Activated naive CD4-positive, alpha-beta T cell treated with anti-CD3 and anti-CD28 coated beads, Interleukin-2, amount 10 ng/mL, durations not matched to agents 7 days and 5 days (primary cell): ENCODE measurements at regions of chr19 and their contacts with region 1.

Region 1: DNA sequence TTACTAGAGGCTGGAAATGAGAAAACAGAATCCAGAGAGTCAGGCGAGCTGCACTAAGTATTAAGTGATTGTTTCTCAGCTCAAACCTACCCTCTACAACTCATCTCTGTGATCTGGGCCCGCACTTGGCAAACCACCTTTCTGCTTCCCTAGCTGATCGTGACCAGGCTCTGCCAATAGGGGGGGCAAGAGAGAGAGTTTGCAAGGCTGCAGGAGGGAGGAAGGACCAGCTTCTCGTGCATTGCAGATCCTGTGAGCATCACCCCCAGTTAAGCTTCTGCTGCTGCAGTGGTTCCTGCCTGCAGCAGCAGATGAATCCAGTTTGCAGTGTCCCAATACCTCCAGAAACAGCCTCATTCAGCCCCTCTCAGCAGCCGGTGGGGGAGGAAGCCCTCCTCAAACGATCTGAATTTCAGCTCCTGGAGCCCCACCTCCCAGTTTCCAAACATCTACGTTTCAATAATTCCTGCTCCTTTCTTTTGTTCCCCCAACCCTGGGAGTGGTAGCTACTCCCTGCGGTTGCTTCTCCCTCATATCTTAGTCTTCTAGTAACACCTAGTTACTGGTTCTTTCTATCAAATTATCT is 20.0 kb downstream of the XRCC1 start:
- DNase-seq: peak; percentile 91
- H3K4me3 Mint-ChIP-seq: no peak overlapping the region
- H3K27ac Mint-ChIP-seq: no peak overlapping the region
- H3K4me1 Mint-ChIP-seq: peaks cover 9% of the 10 kb centered on the region
- H3K27me3 Mint-ChIP-seq: no peaks in the 10 kb centered on the region

Region 2: GRCh38 chr19:43503501-43504425 is 51.5 kb before region 1 on chr19:
- CTCF ChIA-PET with region 1: no interaction called
- DNase-seq: peak; percentile 100
- H3K4me3 Mint-ChIP-seq: peak overlapping the region; percentile 83
- H3K27ac Mint-ChIP-seq: peak overlapping the region; percentile 89
- H3K4me1 Mint-ChIP-seq: peaks cover 42% of the 10 kb centered on the region
- H3K27me3 Mint-ChIP-seq: no peaks in the 10 kb centered on the region

Region 3: DNA sequence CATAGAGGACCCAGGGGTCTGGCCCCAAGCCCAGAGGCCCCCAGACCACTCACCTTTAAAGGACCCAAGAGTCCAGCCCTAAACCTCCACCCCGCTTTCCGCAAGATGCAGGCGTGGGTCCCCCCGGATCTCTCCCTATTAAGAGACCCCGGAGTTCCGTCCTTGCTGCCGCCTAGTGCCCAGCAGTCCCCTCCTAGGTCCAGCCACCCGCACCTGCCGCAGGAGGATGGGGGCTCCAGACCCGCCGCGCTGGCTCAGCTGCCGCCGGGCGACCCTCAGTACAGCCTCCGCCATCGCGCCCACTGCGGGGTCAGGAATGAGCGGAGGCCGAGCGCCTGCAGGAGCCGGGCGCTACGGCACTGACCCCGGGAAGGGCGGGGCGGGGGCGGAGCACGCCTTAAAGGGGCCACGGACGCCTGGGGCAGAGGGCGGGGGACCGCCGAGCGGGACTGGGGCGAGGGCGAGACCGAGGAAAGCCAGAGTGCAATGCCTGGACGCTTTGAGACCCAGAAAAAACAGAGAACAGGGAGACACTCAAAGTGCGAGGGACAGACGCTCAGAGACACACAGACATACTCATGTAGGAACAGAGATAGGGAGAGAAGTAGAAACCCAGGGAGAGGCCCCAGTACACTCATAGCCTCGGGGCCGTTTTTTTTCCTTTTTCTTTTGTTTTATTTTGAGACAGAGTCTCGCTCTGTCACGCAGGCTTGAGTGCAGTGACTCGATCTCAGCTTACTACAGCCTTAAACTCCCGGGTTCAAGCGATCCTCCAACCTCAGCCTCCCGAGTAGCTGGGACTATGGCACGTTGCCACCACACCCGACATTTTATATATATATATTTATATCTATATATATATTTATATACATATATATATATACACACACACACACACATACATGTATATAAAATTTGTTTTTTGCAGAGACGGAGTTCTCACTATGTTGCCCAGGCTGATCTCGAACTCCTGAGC is 28.1 kb before region 1 on chr19 and contains the start of gene ETHE1:
- CTCF ChIA-PET with region 1: interaction called, 21 read pairs
- DNase-seq: peak; percentile 90
- H3K4me3 Mint-ChIP-seq: peak within 1 kb of the TSS; percentile 96
- H3K27ac Mint-ChIP-seq: peak within 1 kb of the TSS; percentile 89
- H3K4me1 Mint-ChIP-seq: peaks cover 34% of the 10 kb centered on the region
- H3K27me3 Mint-ChIP-seq: no peaks in the 10 kb centered on the region

Region 4: DNA sequence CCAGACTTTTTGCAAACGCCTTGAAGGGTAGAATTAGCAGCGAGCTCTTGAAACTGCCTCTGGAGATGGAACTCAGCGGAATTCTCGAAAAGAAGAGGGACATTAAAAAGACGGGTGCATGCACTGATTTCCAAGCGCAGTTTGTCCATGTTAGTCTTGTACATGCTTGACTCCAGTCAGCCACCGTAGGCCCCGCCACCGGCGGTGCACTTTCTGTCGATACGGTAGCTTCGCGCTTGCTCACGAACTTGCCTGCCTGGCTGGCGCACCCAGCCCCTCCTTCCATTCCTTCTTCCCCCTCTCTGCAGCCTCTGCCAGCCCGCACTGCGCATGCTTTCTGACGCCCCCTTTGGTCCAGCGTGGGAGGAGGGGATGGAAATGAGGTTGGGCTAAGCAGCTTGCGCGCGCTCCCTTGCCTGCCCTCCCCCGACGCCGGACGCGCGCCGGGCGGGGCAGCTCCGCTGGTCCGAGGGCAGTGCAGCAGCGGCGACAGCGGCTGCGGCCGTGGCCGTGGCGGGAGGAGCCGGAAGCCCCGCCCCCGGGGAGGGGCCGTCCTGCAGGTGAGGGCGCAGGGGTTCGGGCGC is 22.2 kb before region 1 on chr19 and contains the start of gene ZNF575:
- CTCF ChIA-PET with region 1: interaction called, 21 read pairs
- DNase-seq: peak; percentile 90
- H3K4me3 Mint-ChIP-seq: peak within 1 kb of the TSS; percentile 93
- H3K27ac Mint-ChIP-seq: peak within 1 kb of the TSS; percentile 98
- H3K4me1 Mint-ChIP-seq: peaks cover 27% of the 10 kb centered on the region
- H3K27me3 Mint-ChIP-seq: no peaks in the 10 kb centered on the region

Region 5: GRCh38 chr19:43545276-43545675 is 10.0 kb before region 1 on chr19:
- CTCF ChIA-PET with region 1: interaction called, 16 read pairs
- DNase-seq: no peak
- H3K4me3 Mint-ChIP-seq: no peak overlapping the region
- H3K27ac Mint-ChIP-seq: no peak overlapping the region
- H3K4me1 Mint-ChIP-seq: no peaks in the 10 kb centered on the region
- H3K27me3 Mint-ChIP-seq: no peaks in the 10 kb centered on the region

Region 6: DNA sequence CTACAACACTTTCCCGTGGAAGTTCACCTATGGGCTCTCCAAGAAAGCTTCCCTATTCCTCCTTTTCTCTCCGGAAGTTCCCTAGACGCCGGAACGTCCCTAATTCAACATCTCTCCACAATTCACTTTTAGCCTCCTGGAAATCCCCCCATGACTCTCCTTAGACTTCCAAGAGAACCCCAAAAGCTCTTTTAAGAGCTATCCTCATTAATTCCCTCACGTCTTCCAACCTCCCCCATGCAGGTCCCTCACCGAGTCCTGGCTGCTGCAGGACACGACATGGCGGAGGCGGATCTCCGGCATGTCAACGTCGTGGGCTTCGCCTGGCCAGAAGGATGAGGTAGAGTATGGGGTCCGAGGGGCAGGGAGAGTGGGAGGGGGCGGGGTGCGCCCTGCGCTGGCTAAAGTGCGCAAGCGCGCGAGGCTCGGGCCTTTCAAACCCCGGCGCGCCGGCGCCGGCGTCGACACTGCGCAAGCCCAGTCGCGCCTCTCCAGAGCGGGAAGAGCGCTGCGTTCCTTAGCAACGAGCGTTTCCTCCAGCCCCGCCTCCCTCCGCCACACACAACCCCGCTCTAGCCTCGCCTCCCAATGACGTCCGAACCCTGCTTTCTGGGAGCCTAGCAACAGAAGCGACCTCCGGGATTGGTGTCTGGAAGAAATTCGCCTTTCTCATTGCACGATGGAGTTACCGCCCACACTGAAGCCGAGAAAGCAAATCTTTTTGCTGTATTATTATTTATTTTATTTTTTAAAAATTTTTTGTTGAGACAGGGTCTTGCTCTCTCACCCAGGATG is 20.1 kb after region 1 on chr19 and contains the starts of genes PINLYP and XRCC1:
- CTCF ChIA-PET with region 1: interaction called, 24 read pairs
- DNase-seq: peak; percentile 99
- H3K4me3 Mint-ChIP-seq: peak within 1 kb of the TSS; percentile 97
- H3K27ac Mint-ChIP-seq: peak within 1 kb of the TSS; percentile 90
- H3K4me1 Mint-ChIP-seq: peaks cover 47% of the 10 kb centered on the region
- H3K27me3 Mint-ChIP-seq: peaks cover 24% of the 10 kb centered on the region

Region 7: GRCh38 chr19:43589678-43590077 is 34.4 kb after region 1 on chr19:
- CTCF ChIA-PET with region 1: interaction called, 129 read pairs
- DNase-seq: no peak
- H3K4me3 Mint-ChIP-seq: no peak overlapping the region
- H3K27ac Mint-ChIP-seq: no peak overlapping the region
- H3K4me1 Mint-ChIP-seq: peaks cover 28% of the 10 kb centered on the region
- H3K27me3 Mint-ChIP-seq: no peaks in the 10 kb centered on the region